K562 (cell line): ENCODE measurements at regions of chrX and their contacts with region 1.

Region 1: GRCh38 chrX:24241822-24242648 is 71.8 kb downstream of the SUPT20HL2 start:
- DNase-seq: peak; percentile 12 to 62 (median 36)
- ATAC-seq: peak; percentile 88
- H3K4me3 ChIP-seq: no peak overlapping the region
- H3K27ac ChIP-seq: no peak overlapping the region
- H3K4me1 ChIP-seq: no peaks in the 10 kb centered on the region; a peak in 1 of 5 replicates
- H3K27me3 ChIP-seq: no peaks in the 10 kb centered on the region
- CTCF ChIP-seq: peak; percentile 48 to 69 (median 53); a peak in 4 of 6 replicates
- EP300 ChIP-seq: no peak
- POLR2A ChIP-seq: no peak
- RAD21 ChIP-seq: peak; percentile 54 to 73

Region 2: GRCh38 chrX:23919706-23920320 is 322.2 kb before region 1 on chrX:
- CTCF ChIA-PET with region 1: no interaction called
- POLR2A ChIA-PET with region 1: no interaction called
- in situ Hi-C with region 1: loop called (anchors 10 kb)
- intact Hi-C with region 1: no loop called
- DNase-seq: no peak
- ATAC-seq: peak; percentile 46; the same call in 2 of the 3 replicates
- H3K4me3 ChIP-seq: no peak overlapping the region
- H3K27ac ChIP-seq: no peak overlapping the region
- H3K4me1 ChIP-seq: no peaks in the 10 kb centered on the region; a peak in 1 of 5 replicates
- H3K27me3 ChIP-seq: no peaks in the 10 kb centered on the region
- CTCF ChIP-seq: 0 out of 6 replicates have a peak, but pooled peaks of 2 of the 3 experiments have one; percentile 6 to 17
- EP300 ChIP-seq: no peak
- POLR2A ChIP-seq: no peak
- RAD21 ChIP-seq: peak in 1 of 2 experiments; percentile 30; a peak in 1 of 4 replicates

Region 3: GRCh38 chrX:24081661-24082264 is 160.3 kb before region 1 on chrX:
- CTCF ChIA-PET with region 1: interaction called, 6 read pairs
- POLR2A ChIA-PET with region 1: no interaction called
- in situ Hi-C with region 1: loop called (anchors 10 kb)
- intact Hi-C with region 1: loop called (anchors 1 kb)
- DNase-seq: peak in 2 of 4 experiments; percentile 10 to 86
- ATAC-seq: peak; percentile 86
- H3K4me3 ChIP-seq: no peak overlapping the region
- H3K27ac ChIP-seq: no peak overlapping the region
- H3K4me1 ChIP-seq: no peaks in the 10 kb centered on the region; a peak in 2 of 5 replicates
- H3K27me3 ChIP-seq: no peaks in the 10 kb centered on the region
- CTCF ChIP-seq: peak; percentile 64 to 73 (median 66)
- EP300 ChIP-seq: no peak
- POLR2A ChIP-seq: no peak
- RAD21 ChIP-seq: peak; percentile 34 to 62; a peak in 3 of 4 replicates

Region 4: GRCh38 chrX:24150051-24150790 is 91.8 kb before region 1 on chrX:
- CTCF ChIA-PET with region 1: no interaction called
- POLR2A ChIA-PET with region 1: no interaction called
- in situ Hi-C with region 1: no loop called
- intact Hi-C with region 1: loop called (anchors 2 kb)
- DNase-seq: peak; percentile 84 to 94 (median 89)
- ATAC-seq: peak; percentile 87
- H3K4me3 ChIP-seq: peak overlapping the region; percentile 89
- H3K27ac ChIP-seq: peak overlapping the region; percentile 96
- H3K4me1 ChIP-seq: peaks cover 12 to 30% of the 10 kb centered on the region in 2 experiments; a peak in 4 of 5 replicates
- H3K27me3 ChIP-seq: no peaks in the 10 kb centered on the region
- CTCF ChIP-seq: peak; percentile 32 to 89 (median 70); a peak in 5 of 6 replicates
- EP300 ChIP-seq: no peak
- POLR2A ChIP-seq: 0 out of 2 replicates have a peak, but pooled peaks have one; percentile 39
- RAD21 ChIP-seq: peak; percentile 40 to 54